ENCODE measurements at regions of chr4 and their contacts with region 1.

Region 1: GRCh38 chr4:48779998-48780742 is at the start of gene FRYL:
- DNase-seq: peak; percentile 87 to 99 (median 98)
- ATAC-seq: peak; percentile 92
- H3K4me3 ChIP-seq: peak within 1 kb of the TSS; percentile 80
- H3K4me3 Mint-ChIP-seq: peak within 1 kb of the TSS; percentile 76 to 96 (median 92)
- H3K27ac ChIP-seq: peak within 1 kb of the TSS; percentile 89
- H3K27ac Mint-ChIP-seq: peak within 1 kb of the TSS; percentile 76 to 96 (median 88)
- H3K4me1 ChIP-seq: peaks cover 18 to 23% of the 10 kb centered on the region in 2 donors
- H3K4me1 Mint-ChIP-seq: peaks cover 35 to 49% (median 46%) of the 10 kb centered on the region in 7 donors
- H3K27me3 ChIP-seq: no peaks in the 10 kb centered on the region
- H3K27me3 Mint-ChIP-seq: no peaks in the 10 kb centered on the region
- total RNA-seq, gene FRYL: 89.5 to 126 (median 112) TPM

Region 2: DNA sequence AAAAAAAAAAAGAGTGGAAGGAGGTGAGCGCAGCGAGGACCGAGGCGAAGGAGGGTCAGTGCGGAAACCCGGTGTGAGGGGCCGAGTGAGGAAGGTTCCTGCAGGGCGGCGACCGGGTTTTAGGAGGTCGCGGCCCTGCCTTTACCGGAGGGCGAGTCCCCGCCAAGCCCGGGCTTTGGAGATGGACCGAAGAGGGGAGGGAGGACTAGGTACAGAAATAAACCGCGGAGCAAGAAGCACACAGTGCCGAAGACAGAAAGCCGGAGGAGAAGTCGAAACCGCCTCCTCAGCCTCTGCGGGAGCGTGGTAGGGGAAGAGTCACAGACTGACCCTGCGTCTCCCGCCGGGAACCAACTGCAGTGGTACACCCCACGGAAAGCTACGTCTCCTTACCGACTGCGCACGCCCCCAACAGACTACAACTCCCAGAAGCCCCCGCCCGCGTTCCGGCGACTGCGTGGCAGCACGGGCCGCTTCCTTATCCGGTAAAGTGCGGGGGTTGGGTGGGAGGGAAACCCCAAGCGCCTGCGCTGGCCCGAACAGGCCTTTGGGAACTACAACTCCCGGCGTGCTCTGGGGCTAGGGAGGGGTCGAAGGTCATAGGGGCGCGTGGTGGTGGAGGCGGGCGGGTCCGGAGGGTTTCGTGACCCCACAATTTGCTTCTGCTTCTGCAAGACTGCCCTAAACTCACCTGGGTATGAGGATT is 865.8 kb before region 1 on chr4 and contains the start of gene NFXL1:
- CTCF ChIA-PET with region 1: no interaction called
- POLR2A ChIA-PET with region 1: no interaction called
- intact Hi-C with region 1: loop called (anchors 1 kb)
- DNase-seq: peak; percentile 90 to 95 (median 93)
- ATAC-seq: peak; percentile 98
- H3K4me3 ChIP-seq: peak within 1 kb of the TSS; percentile 92
- H3K4me3 Mint-ChIP-seq: peak within 1 kb of the TSS; percentile 93 to 99 (median 96)
- H3K27ac ChIP-seq: peak within 1 kb of the TSS; percentile 88
- H3K27ac Mint-ChIP-seq: peak within 1 kb of the TSS; percentile 89 to 98 (median 96)
- H3K4me1 ChIP-seq: peaks cover 12 to 15% of the 10 kb centered on the region in 2 donors
- H3K4me1 Mint-ChIP-seq: peaks cover 18 to 41% (median 32%) of the 10 kb centered on the region in 7 donors
- H3K27me3 ChIP-seq: no peaks in the 10 kb centered on the region
- H3K27me3 Mint-ChIP-seq: no peaks in the 10 kb centered on the region
- total RNA-seq, gene NFXL1: 10.4 to 19.3 (median 13.2) TPM

Region 3: DNA sequence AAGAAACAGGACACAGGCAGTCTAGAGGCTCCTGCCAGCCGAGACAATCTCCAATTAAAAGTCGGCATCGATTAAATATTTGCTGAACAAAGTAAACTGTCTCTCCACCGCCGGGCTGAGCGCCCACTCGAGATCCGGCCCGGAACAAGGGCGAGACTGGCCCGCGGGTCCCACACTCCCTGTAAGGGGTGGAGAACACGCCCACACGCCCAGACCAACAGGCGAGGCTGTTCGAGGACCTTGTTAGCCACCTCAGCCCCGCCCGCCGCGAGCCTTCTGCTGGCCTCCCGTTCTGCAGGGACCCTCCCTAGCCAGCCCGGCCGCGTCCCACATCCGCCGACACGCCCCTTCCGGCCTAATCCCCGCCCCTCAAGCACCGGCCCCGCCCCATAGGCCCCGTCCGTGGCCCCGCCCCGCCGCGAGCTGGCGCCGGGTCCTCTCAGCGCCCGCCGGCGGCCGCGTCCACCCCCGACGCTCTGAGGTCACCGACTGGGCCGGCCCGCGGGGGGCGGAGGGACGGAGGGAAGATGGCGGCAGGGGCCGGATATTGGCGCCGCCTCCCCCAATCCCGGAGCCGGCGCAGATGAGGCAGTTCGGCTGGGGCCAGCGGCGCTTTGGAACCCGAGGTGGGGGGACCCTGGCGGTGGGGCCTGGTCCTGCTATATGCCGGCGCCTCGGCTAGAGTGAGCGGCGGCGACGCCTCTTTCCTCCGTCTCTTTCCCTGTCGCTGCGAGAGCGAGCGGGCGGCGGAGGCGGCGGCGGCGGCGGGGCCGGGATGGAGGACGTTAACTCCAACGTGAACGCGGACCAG is 439.0 kb before region 1 on chr4 and contains the start of gene SLAIN2:
- CTCF ChIA-PET with region 1: no interaction called
- POLR2A ChIA-PET with region 1: interaction called, 4 read pairs
- intact Hi-C with region 1: loop called (anchors 1 kb)
- DNase-seq: peak; percentile 91 to 100 (median 96)
- ATAC-seq: peak; percentile 93
- H3K4me3 ChIP-seq: peak within 1 kb of the TSS; percentile 76
- H3K4me3 Mint-ChIP-seq: peak within 1 kb of the TSS; percentile 81 to 99 (median 96)
- H3K27ac ChIP-seq: peak within 1 kb of the TSS; percentile 91
- H3K27ac Mint-ChIP-seq: peak within 1 kb of the TSS; percentile 91 to 98 (median 96)
- H3K4me1 ChIP-seq: peaks cover 17 to 20% of the 10 kb centered on the region in 2 donors
- H3K4me1 Mint-ChIP-seq: peaks cover 40 to 54% (median 45%) of the 10 kb centered on the region in 7 donors
- H3K27me3 ChIP-seq: no peaks in the 10 kb centered on the region
- H3K27me3 Mint-ChIP-seq: no peaks in the 10 kb centered on the region
- total RNA-seq, gene SLAIN2: 53.2 to 87.5 (median 77.2) TPM

Region 4: DNA sequence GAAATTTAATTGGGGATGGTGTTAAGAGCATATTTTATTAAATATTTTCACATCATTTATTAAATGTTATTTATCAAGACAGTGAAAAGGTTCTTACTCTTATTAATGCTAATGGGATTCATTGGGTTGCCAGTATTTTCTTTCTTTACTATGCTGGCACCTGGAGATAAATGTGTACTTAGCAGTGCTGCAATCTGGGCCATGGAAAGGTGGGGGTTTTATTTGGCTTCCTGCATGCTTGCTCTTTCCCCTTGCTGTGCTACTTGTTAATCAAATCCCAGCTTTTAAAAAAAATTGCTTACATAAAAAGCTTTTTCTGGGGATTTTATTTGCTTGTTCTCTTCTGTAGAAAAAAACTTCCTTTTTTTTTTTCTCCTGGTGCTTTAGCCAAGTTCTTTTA is 241.8 kb before region 1 on chr4:
- CTCF ChIA-PET with region 1: no interaction called
- POLR2A ChIA-PET with region 1: no interaction called
- intact Hi-C with region 1: no loop called
- DNase-seq: no peak
- ATAC-seq: no peak
- H3K4me3 ChIP-seq: no peak overlapping the region
- H3K4me3 Mint-ChIP-seq: no peak overlapping the region
- H3K27ac ChIP-seq: no peak overlapping the region
- H3K27ac Mint-ChIP-seq: no peak overlapping the region
- H3K4me1 ChIP-seq: no peaks in the 10 kb centered on the region
- H3K4me1 Mint-ChIP-seq: no peaks in the 10 kb centered on the region
- H3K27me3 ChIP-seq: no peaks in the 10 kb centered on the region
- H3K27me3 Mint-ChIP-seq: no peaks in the 10 kb centered on the region

Region 5: DNA sequence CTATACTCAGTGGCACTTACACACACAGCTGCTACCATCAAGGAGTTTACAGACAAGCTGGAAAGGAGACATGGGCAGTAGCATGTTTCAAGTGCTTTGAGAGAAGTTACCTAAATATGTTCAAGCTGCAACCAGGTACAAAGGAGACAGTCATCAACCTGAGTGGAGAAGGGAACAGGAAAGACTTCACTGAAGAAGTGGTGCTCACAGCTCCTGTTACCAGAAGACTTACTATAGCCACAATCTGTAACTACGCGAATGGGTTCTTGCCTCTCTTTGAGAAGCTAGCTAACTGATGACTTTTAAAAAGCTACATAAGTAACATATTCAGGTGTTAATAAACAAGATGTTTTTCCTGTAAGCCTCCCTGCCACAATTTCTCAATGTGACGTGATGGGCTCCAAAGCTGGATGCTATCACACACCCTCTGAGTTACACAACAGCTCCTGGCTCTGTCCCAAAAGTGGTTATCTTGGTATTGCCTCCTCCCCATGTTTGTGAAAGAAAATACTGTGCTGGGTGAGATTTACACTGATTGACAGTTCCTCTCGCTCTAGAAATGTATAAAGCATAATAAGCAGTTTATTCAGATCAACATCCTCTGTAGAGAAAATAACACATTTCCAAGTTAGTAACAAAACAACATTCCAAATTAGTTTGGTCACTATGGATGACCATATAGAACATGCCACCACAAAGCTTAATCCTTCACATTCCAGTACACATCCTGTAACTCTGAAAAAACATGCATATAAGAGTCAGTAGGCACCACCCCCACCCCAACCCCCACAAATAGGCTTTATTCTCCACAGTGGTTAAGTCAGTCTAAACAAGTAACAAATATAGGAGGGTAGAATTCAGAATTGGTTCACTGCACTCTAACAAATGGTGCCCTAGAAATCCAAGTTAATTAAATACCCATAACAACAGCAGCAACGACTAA is 81.9 kb before region 1 on chr4:
- CTCF ChIA-PET with region 1: no interaction called
- POLR2A ChIA-PET with region 1: interaction called, 3 read pairs
- intact Hi-C with region 1: loop called in 1 of 2 experiments (anchors 1 kb)
- DNase-seq: peak in 1 of 9 donors; percentile 11
- ATAC-seq: peak; percentile 41
- H3K4me3 ChIP-seq: no peak overlapping the region
- H3K4me3 Mint-ChIP-seq: peak overlapping the region in 3 of 10 donors; percentile 3 to 15 (median 9)
- H3K27ac ChIP-seq: no peak overlapping the region
- H3K27ac Mint-ChIP-seq: peak overlapping the region in 8 of 9 donors; percentile 10 to 61 (median 25)
- H3K4me1 ChIP-seq: peaks cover 16 to 19% of the 10 kb centered on the region in 2 donors
- H3K4me1 Mint-ChIP-seq: peaks cover 27 to 88% (median 77%) of the 10 kb centered on the region in 7 donors
- H3K27me3 ChIP-seq: no peaks in the 10 kb centered on the region
- H3K27me3 Mint-ChIP-seq: no peaks in the 10 kb centered on the region

Region 6: GRCh38 chr4:48752726-48753125 is 27.4 kb before region 1 on chr4:
- CTCF ChIA-PET with region 1: no interaction called
- POLR2A ChIA-PET with region 1: no interaction called
- intact Hi-C with region 1: loop called in 1 of 2 experiments (anchors 2 kb)
- DNase-seq: no peak
- ATAC-seq: no peak
- H3K4me3 ChIP-seq: no peak overlapping the region
- H3K4me3 Mint-ChIP-seq: peak overlapping the region in 4 of 10 donors; percentile 2 to 48 (median 18)
- H3K27ac ChIP-seq: no peak overlapping the region
- H3K27ac Mint-ChIP-seq: peak overlapping the region in 7 of 9 donors; percentile 2 to 88 (median 38)
- H3K4me1 ChIP-seq: peaks cover under 1 to 10% of the 10 kb centered on the region in 2 donors
- H3K4me1 Mint-ChIP-seq: peaks cover 38 to 92% (median 74%) of the 10 kb centered on the region in 7 donors
- H3K27me3 ChIP-seq: no peaks in the 10 kb centered on the region
- H3K27me3 Mint-ChIP-seq: no peaks in the 10 kb centered on the region

Region 7: DNA sequence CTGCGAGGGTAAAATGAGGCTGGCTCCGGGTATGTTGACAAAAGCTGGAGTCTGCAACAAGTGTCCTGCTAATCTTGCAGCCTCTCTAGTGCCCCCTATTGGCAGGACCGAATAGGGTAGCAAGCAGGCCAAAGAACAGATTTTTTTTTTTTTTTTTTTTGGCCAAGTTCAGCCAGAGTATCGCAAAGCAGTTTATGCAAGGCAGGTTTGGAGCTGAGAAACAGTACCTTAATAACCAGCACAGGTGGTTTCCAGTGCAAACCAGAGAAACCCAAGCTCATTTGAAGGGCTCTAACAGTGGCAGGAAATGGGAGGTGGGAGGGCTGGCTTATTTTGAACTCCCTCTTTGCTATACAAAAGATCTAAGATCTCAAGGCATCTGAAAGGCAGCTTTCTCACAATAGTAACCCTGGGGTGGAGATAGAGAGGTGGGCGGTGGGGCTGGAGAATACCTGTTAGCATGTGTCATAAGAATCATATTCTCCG is 164.6 kb after region 1 on chr4:
- CTCF ChIA-PET with region 1: no interaction called
- POLR2A ChIA-PET with region 1: interaction called, 4 read pairs
- intact Hi-C with region 1: loop called in 1 of 2 experiments (anchors 1 kb)
- DNase-seq: peak in 8 of 9 donors; percentile 34 to 73 (median 60)
- ATAC-seq: peak; percentile 89
- H3K4me3 ChIP-seq: peak overlapping the region; percentile 25
- H3K4me3 Mint-ChIP-seq: peak overlapping the region in 9 of 10 donors; percentile 13 to 76 (median 68)
- H3K27ac ChIP-seq: no peak overlapping the region
- H3K27ac Mint-ChIP-seq: peak overlapping the region in 7 of 9 donors; percentile 27 to 88 (median 62)
- H3K4me1 ChIP-seq: peaks cover 0 to 18% of the 10 kb centered on the region in 2 donors
- H3K4me1 Mint-ChIP-seq: peaks cover 6 to 57% (median 40%) of the 10 kb centered on the region in 7 donors
- H3K27me3 ChIP-seq: no peaks in the 10 kb centered on the region
- H3K27me3 Mint-ChIP-seq: peaks cover 0 to 18% (median 0%) of the 10 kb centered on the region in 5 donors